ENCODE measurements at regions of chr11 and their contacts with region 1.

Region 1: GRCh38 chr11:44592125-44592940 is 26.9 kb downstream of the CD82 start:
- DNase-seq: no peak
- H3K4me3 ChIP-seq: no peak overlapping the region
- H3K27me3 ChIP-seq: no peaks in the 10 kb centered on the region
- CTCF ChIP-seq: no peak

Region 2: DNA sequence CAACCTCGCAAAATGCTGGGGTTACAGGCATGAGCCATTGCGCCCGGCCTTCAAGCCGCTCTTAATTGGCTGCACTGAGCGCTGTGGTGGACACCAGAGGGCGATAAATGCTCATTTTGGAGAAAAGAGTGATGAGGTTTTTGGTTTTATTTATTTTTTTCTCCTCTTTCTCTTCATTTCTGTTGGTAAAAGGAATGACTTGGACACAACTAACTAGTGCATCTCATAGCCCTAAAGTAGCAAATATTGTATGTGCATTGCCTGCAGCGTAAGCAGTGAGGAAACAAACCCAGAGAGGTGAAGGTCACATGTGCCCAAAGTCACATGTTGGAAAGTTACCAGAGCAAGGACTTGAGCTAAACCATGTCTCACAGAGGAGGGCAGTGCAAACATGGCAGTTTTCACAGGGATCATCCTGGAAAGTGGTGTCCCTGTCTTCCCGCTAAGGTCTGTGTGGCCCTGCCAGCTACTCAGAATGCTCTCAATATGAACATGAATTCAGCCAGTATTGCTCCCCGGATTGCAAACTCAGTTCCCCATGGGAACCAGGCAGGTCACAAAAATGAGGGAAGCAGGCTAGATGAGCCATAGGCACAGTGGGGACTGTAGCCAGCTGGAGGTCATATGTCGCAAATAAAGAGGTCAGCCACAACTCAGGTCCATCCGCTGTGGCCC is 35.5 kb before region 1 on chr11:
- CTCF ChIA-PET with region 1: interaction called, 11 read pairs
- POLR2A ChIA-PET with region 1: no interaction called
- DNase-seq: no peak
- H3K4me3 ChIP-seq: no peak overlapping the region
- H3K27me3 ChIP-seq: no peaks in the 10 kb centered on the region; the same call in 1 of the 2 replicates
- CTCF ChIP-seq: peak; percentile 79

Region 3: DNA sequence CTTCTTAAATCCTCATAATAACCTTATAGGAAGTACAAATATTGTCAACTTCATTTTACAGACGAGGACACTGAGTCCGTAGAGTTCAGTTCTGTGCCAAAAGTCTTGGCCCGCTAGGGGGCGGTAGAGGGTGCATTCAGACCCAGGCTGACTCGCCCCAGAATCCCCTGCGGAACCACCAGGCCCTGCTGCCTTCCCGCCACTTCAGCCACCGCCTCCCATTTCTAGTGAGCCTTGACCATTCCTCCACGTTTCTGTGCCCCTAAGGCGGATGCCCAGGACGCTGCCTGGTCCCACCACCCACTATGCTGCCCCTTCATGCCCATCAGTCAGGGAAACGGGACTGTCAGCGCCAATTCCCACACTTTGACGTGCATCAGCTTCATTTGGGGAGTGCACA is 674.7 kb after region 1 on chr11:
- CTCF ChIA-PET with region 1: no interaction called
- POLR2A ChIA-PET with region 1: no interaction called
- DNase-seq: no peak
- H3K4me3 ChIP-seq: no peak overlapping the region
- H3K27me3 ChIP-seq: no peaks in the 10 kb centered on the region; the same call in 1 of the 2 replicates
- CTCF ChIP-seq: peak; percentile 28; the same call in 1 of the 2 replicates

Measured in BJ (cell line).